AG04449 (cell line): ENCODE measurements at regions of chr9 and their contacts with region 1.

Region 1: DNA sequence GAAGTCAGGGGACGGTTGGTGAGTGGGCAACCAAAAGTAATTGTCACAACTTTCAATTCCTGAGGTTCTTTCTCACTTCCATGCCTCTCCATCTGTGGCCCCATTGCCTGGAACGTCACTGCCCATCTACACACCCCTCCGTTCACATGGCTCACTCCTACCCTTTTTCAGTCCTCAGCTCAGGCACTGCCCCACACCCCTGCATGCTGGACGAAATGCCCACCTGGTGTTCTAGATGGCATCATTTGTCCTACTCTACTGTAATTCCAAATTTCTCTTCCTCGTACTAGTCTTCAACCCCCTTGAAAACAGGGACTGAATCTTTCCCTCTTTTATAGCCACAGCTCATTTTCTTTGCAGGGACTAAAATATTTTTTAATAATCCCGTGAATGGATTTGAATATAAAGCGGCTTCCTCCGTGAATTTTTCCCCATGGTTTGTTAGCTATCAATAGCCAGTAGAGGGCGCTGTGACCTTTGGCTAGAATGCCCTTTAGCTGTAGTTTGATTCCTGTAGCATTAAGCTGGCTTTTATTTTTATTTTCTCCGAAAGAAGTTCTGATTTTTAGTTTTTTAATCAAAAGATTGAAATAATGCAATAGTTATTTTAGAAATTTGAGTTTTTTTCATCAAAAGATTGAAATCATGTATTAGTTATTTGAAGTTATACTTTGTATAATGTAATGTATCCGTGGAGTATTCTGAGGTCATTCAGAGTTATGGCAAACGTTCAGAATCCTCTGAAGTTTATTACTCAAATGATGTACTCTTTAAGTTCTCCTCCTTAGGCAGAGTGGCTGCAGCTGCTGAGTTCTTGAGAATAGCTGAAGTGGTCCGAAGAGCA is 232.1 kb downstream of the SH3GL2 start:
- DNase-seq: peak; percentile 17
- H3K4me3 ChIP-seq: no peak overlapping the region
- CTCF ChIP-seq: peak; percentile 66

Region 2: GRCh38 chr9:17414986-17415385 is 396.0 kb before region 1 on chr9:
- CTCF ChIA-PET with region 1: no interaction called
- POLR2A ChIA-PET with region 1: no interaction called
- DNase-seq: no peak
- H3K4me3 ChIP-seq: no peak overlapping the region
- CTCF ChIP-seq: no peak

Region 3: GRCh38 chr9:17824191-17824590 is 13.2 kb after region 1 on chr9:
- CTCF ChIA-PET with region 1: interaction called, 19 read pairs
- POLR2A ChIA-PET with region 1: no interaction called
- DNase-seq: no peak
- H3K4me3 ChIP-seq: no peak overlapping the region
- CTCF ChIP-seq: no peak

Region 4: GRCh38 chr9:18060245-18060934 is 249.4 kb after region 1 on chr9:
- CTCF ChIA-PET with region 1: no interaction called
- POLR2A ChIA-PET with region 1: no interaction called
- DNase-seq: no peak
- H3K4me3 ChIP-seq: no peak overlapping the region
- CTCF ChIP-seq: no peak

Region 5: GRCh38 chr9:18215626-18216025 is 404.7 kb after region 1 on chr9:
- CTCF ChIA-PET with region 1: interaction called, 94 read pairs
- POLR2A ChIA-PET with region 1: no interaction called
- DNase-seq: no peak
- H3K4me3 ChIP-seq: no peak overlapping the region
- CTCF ChIP-seq: no peak

Region 6: GRCh38 chr9:18366184-18366583 is 555.2 kb after region 1 on chr9:
- CTCF ChIA-PET with region 1: no interaction called
- POLR2A ChIA-PET with region 1: no interaction called
- DNase-seq: no peak
- H3K4me3 ChIP-seq: no peak overlapping the region
- CTCF ChIP-seq: no peak